HEK293 (cell line): ENCODE measurements at regions of chr11 and their contacts with region 1.

Region 1: DNA sequence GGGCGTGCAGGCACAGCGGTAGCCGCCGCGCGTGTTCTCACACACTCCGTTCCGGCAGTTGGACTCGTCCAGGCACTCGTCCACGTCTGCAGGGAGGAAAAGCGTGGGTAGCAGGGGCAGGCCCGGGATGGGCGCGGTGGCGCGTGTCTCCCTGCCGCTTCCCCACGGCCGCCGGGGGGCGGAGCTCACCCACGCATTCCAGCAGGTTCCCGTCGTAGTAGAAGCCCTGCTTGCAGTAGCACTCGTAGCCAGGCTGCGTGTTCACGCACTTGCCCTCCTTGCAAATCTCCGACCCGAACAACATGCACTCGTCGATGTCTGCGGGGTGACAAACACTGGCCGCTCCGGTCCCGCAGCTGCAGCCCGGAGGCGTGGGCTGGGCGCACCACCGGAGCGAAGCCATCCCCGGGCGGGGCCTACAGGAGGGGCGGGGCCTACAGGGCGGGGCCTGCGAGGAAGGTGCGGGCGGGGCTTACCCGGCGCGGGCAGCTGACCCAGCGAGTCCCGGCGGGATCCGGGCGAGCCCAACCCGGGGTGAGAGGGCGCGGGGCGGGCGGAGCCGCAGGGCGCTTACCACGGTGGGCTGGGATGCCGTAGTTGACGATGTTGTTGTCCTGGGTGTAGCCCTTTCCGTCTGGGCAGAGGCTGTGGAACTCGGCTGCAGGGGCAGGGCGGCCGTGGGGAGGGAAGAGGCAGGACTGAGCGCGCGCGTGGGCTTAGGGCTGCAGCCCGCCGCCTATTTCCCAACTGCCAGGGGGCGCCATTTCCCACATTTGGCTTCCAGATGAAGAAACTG is 15.6 kb downstream of the SCYL1 start:
- H3K4me3 ChIP-seq: peak overlapping the region; percentile 47
- H3K27ac ChIP-seq: peak overlapping the region; percentile 69; the same call in 1 of the 2 replicates
- H3K4me1 ChIP-seq: peaks cover 3% of the 10 kb centered on the region; the same call in 1 of the 2 replicates
- CTCF ChIP-seq: peak; percentile 81

Region 2: DNA sequence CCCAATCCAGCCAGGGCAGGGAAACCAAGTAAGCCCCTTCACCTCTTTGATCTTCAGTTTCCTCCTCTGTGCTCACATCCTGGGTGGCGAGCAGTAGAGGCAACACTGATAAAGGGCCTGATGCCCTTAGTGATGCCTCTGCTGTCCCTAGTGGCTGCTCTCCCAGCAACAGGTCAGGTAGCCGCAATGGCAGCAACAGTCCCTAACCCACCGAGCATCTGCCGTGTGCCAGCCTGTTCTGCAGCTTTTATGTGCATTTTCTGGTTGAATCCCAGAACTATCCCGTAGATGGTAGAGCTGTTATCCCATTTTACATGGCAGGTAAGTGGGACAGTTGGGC is 10.4 kb before region 1 on chr11:
- CTCF ChIA-PET with region 1: interaction called, 21 read pairs
- POLR2A ChIA-PET with region 1: interaction called, 12 read pairs
- H3K4me3 ChIP-seq: no peak overlapping the region
- H3K27ac ChIP-seq: no peak overlapping the region
- H3K4me1 ChIP-seq: peaks cover 4% of the 10 kb centered on the region; the same call in 1 of the 2 replicates
- CTCF ChIP-seq: 0 out of 2 replicates have a peak, but pooled peaks have one; percentile 19

Region 3: GRCh38 chr11:65558002-65558931 is 17.8 kb after region 1 on chr11 and contains the start of gene LTBP3:
- CTCF ChIA-PET with region 1: interaction called, 53 read pairs
- POLR2A ChIA-PET with region 1: interaction called, 11 read pairs
- H3K4me3 ChIP-seq: peak within 1 kb of the TSS; percentile 52
- H3K27ac ChIP-seq: peak within 1 kb of the TSS; percentile 81
- H3K4me1 ChIP-seq: peaks cover 19% of the 10 kb centered on the region
- CTCF ChIP-seq: no peak

Region 4: DNA sequence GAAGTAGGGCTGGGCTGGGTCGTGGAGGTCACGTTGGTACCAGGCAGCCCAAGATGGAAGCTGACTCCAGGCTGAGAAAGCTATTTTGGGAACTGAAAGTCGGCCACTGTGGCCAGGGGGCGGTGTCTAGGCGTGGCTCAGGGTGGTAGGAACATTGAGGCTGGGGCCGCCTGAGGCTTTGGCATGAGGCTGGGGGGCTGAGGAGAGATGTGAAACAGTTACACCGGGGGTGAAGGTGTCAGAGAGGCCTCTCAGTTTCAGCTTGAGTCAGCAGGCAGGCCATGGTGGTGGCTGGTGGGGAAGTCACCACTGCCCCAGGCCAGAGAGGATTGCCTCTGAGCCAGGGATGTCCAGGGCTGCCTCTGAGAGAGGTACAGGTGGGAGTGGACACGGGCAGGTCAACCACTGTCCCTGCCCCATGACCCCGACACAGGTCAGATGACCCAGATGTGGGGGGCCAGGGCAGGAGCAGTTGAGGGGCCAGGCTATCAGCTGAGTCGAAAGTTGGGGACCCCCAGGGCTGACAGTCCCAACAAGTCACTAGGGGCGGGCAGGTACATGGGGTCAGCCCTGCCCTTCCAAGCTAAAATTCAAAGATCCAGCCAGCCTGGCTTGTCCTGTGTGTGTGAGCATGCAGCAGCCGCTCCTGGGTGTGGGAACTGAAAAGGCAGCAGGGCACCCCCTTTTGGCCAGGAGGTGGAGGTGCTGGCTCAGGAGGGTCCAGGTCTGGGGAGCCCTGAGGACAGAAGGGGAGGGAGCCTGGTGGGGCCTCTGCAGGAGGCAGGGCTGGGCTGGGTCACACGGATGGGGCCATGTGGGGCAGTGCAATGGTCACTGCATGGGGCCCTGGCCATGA is 47.9 kb after region 1 on chr11:
- CTCF ChIA-PET with region 1: interaction called, 46 read pairs
- POLR2A ChIA-PET with region 1: interaction called, 8 read pairs
- H3K4me3 ChIP-seq: no peak overlapping the region
- H3K27ac ChIP-seq: no peak overlapping the region
- H3K4me1 ChIP-seq: no peaks in the 10 kb centered on the region
- CTCF ChIP-seq: peak; percentile 35; the same call in 1 of the 2 replicates

Region 5: DNA sequence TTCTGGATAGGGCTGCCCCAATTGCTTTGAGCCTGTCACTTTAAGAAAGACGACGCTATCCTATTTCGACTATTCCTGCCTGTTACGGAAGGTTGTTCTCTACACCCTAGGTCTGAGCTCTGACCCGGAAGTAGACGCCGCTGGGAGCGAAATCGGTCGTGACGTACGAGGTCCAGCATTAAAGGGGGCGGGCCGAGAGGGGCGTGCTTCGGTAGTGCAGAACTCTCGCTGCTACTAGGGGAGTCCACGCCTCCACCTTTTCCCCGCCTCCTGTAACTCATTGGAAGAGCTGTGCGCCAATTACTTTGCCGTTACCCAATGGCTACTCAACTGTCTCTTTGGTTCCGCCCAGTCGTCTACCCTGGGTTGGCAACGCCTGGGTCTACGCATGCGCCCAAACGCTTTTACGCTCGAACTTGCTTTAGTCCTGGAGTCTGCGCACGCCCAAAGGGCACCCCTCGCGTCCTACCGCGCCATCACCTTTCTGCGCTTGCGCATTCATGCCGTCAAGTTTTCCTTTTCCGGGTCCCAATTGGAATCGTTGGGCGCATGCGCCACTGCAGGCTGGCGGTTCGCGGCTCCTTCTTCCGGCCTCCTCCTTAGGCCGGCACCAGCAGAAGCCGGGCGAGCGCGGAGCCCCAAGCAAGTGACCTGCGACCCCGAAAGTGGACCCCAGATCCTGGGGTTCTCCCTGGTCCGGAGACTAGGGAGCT is 74.9 kb after region 1 on chr11 and contains the start of gene PCNX3:
- CTCF ChIA-PET with region 1: interaction called, 3 read pairs
- POLR2A ChIA-PET with region 1: interaction called, 13 read pairs
- H3K4me3 ChIP-seq: peak within 1 kb of the TSS; percentile 91
- H3K27ac ChIP-seq: peak within 1 kb of the TSS; percentile 79
- H3K4me1 ChIP-seq: no peaks in the 10 kb centered on the region
- CTCF ChIP-seq: no peak

Region 6: DNA sequence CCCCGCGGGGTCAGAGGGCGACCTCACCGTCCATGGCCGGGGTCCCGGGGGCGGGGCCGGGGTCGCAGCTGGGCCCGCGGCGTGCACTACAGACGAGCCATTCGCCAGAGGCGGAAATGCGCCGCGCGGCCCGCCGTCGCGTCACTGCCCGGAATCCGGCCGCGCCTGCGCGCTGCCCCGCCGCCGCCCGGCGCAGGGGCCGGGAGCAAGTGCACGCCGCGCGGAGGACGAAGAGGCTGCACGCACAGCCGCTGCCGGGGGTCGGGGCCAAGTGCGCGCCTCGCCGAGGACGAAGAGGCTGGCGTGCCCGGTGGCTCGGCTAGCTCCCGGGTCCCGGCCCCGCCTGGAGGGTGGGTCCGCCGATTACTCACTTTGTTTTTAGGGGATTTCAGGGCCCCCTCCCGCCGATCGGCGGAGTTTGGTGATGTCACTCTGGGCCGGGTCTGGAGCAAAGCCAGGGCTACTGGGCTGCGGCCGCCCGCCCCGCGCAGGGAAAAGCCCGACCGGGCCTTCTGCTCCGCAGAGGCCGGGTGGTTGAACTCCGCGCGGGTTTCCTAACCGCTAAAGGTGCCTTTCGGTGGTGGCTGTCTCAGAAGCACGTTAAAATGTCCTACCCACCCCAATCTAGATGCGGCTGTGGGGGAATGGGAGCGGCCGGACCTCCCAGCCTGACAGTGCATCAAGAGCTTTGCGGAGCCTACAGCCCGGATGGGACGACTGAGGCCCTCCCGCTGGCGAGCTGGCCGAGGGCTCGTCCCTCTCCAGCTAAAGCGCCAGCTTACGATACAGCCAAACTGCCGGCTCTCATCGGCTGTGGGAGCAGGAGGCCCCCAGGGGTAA is 122.5 kb after region 1 on chr11 and contains the start of gene RELA:
- CTCF ChIA-PET with region 1: no interaction called
- POLR2A ChIA-PET with region 1: interaction called, 10 read pairs
- H3K4me3 ChIP-seq: peak within 1 kb of the TSS; percentile 82
- H3K27ac ChIP-seq: peak within 1 kb of the TSS; percentile 93
- H3K4me1 ChIP-seq: no peaks in the 10 kb centered on the region
- CTCF ChIP-seq: no peak